Gastrocnemius medialis (tissue), 4 donors: ENCODE measurements at regions of chr1 and their contacts with region 1.

Region 1: GRCh38 chr1:164786980-164787833 is 228.2 kb downstream of the PBX1 start:
- DNase-seq: peak; percentile 75 to 89
- ATAC-seq: peak; percentile 87 to 88
- H3K4me3 ChIP-seq: peak overlapping the region; percentile 4 to 46 (median 29)
- H3K27ac ChIP-seq: peak overlapping the region; percentile 86 to 93 (median 90)
- H3K4me1 ChIP-seq: peaks cover 65 to 76% of the 10 kb centered on the region in 2 donors
- H3K27me3 ChIP-seq: no peaks in the 10 kb centered on the region
- CTCF ChIP-seq: peak; percentile 88 to 96 (median 94)
- POLR2A ChIP-seq: no peak

Region 2: GRCh38 chr1:164440232-164440631 is 347.0 kb before region 1 on chr1:
- in situ Hi-C with region 1: no loop called
- intact Hi-C with region 1: loop called (anchors 10 kb)
- DNase-seq: peak in 1 of 2 donors; percentile 20
- ATAC-seq: peak in 1 of 2 donors; percentile 76
- H3K4me3 ChIP-seq: no peak overlapping the region
- H3K27ac ChIP-seq: no peak overlapping the region
- H3K4me1 ChIP-seq: peaks cover 5 to 11% of the 10 kb centered on the region in 2 donors
- H3K27me3 ChIP-seq: no peaks in the 10 kb centered on the region
- CTCF ChIP-seq: peak in 2 of 5 experiments; percentile 9 to 43
- POLR2A ChIP-seq: no peak

Region 3: GRCh38 chr1:164518692-164519332 is 268.4 kb before region 1 on chr1:
- in situ Hi-C with region 1: no loop called
- intact Hi-C with region 1: loop called (anchors 5 kb)
- DNase-seq: no peak
- ATAC-seq: no peak
- H3K4me3 ChIP-seq: no peak overlapping the region
- H3K27ac ChIP-seq: no peak overlapping the region
- H3K4me1 ChIP-seq: peaks cover 14 to 16% of the 10 kb centered on the region in 2 donors
- H3K27me3 ChIP-seq: no peaks in the 10 kb centered on the region
- CTCF ChIP-seq: no peak
- POLR2A ChIP-seq: no peak

Region 4: GRCh38 chr1:164558461-164559341 is 228.5 kb before region 1 on chr1 and contains the start of gene PBX1:
- in situ Hi-C with region 1: loop called in 1 of 4 experiments (anchors 5 kb)
- intact Hi-C with region 1: loop called (anchors 2 kb)
- DNase-seq: peak; percentile 99
- ATAC-seq: peak; percentile 93 to 96
- H3K4me3 ChIP-seq: peak within 1 kb of the TSS; percentile 72 to 94 (median 82)
- H3K27ac ChIP-seq: peak within 1 kb of the TSS; percentile 89 to 92 (median 90)
- H3K4me1 ChIP-seq: peaks cover 16 to 18% of the 10 kb centered on the region in 2 donors
- H3K27me3 ChIP-seq: no peaks in the 10 kb centered on the region
- CTCF ChIP-seq: peak in 1 of 5 experiments; percentile 2
- POLR2A ChIP-seq: peak; percentile 66 to 92
- total RNA-seq, gene PBX1: 21.7 to 36.5 (median 29.0) TPM

Region 5: GRCh38 chr1:164637461-164638375 is 149.5 kb before region 1 on chr1:
- in situ Hi-C with region 1: loop called in 1 of 4 experiments (anchors 10 kb)
- intact Hi-C with region 1: loop called (anchors 2 kb)
- DNase-seq: peak in 1 of 2 donors; percentile 48
- ATAC-seq: peak; percentile 18 to 21
- H3K4me3 ChIP-seq: no peak overlapping the region
- H3K27ac ChIP-seq: peak overlapping the region; percentile 84 to 92 (median 90)
- H3K4me1 ChIP-seq: peaks cover 97 to 100% of the 10 kb centered on the region in 2 donors
- H3K27me3 ChIP-seq: no peaks in the 10 kb centered on the region
- CTCF ChIP-seq: no peak
- POLR2A ChIP-seq: no peak

Region 6: GRCh38 chr1:164673584-164674214 is 113.5 kb before region 1 on chr1:
- in situ Hi-C with region 1: loop called in 1 of 4 experiments (anchors 25 kb)
- intact Hi-C with region 1: loop called (anchors 2 kb)
- DNase-seq: peak; percentile 90 to 93
- ATAC-seq: peak; percentile 96 to 97
- H3K4me3 ChIP-seq: no peak overlapping the region
- H3K27ac ChIP-seq: peak overlapping the region; percentile 76 to 92 (median 80)
- H3K4me1 ChIP-seq: peaks cover 46 to 50% of the 10 kb centered on the region in 2 donors
- H3K27me3 ChIP-seq: no peaks in the 10 kb centered on the region
- CTCF ChIP-seq: peak; percentile 57 to 93 (median 87)
- POLR2A ChIP-seq: peak; percentile 24 to 49

Region 7: DNA sequence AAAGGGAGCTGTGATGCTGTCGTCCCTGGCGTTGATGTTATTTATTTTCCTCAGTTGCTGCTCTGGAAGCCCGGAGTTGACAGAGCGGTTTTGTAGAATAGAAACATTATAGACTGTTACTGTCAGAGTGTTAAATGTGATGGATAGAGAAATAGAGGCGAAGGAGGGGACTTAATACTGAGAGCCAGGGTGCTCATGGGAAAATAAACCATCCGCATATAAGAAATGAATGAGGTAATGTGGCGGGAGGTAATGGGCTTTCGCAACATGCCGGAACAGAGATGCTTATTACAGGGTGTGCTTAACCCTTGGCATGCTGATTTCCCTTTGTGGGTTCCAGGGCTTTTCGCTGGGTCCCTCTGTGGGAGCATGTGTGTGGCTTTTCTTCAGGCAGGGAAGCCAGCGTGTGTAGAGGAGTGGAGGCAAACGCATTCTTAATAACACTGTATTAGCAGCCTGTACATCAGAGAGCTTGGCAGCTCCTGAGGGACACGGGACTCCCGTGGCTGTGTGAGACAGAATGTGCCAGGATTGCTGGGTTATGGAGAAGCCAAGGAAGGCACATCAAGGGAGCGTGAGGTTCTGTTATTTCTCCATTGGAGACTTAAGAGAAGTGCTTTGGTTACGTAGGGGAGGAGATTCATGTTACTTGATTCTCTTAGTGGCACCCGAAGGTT is 87.3 kb before region 1 on chr1:
- in situ Hi-C with region 1: loop called in 2 of 4 experiments (anchors 10 to 25 kb)
- intact Hi-C with region 1: no loop called
- DNase-seq: peak; percentile 84 to 88
- ATAC-seq: peak; percentile 80 to 86
- H3K4me3 ChIP-seq: peak overlapping the region; percentile 29 to 51 (median 41)
- H3K27ac ChIP-seq: peak overlapping the region; percentile 81 to 88 (median 86)
- H3K4me1 ChIP-seq: peaks cover 19 to 64% of the 10 kb centered on the region in 2 donors
- H3K27me3 ChIP-seq: no peaks in the 10 kb centered on the region
- CTCF ChIP-seq: no peak
- POLR2A ChIP-seq: peak; percentile 56 to 64

Region 8: DNA sequence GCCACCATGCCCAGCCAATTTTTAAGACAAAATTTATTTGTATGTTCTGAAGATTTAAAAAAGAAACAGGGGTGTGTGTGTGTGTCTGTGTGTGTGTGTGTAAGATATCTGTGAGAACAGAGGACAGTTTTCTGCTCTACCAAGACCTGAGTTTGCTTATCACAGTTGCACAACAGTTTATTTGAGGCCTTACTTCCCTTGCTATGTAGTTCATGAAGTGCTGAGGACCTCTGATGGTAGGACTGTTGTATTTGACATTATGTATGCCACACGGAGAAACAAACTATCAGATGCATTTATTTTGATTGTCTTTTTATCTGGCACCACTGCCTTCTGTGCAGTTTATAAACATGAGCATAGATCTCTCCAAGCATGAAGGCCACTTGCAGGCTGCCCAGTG is 127.0 kb after region 1 on chr1:
- in situ Hi-C with region 1: no loop called
- intact Hi-C with region 1: no loop called
- DNase-seq: no peak
- ATAC-seq: peak; percentile 85 to 96
- H3K4me3 ChIP-seq: no peak overlapping the region
- H3K27ac ChIP-seq: no peak overlapping the region
- H3K4me1 ChIP-seq: peaks cover 7 to 8% of the 10 kb centered on the region in 2 donors
- H3K27me3 ChIP-seq: no peaks in the 10 kb centered on the region
- CTCF ChIP-seq: peak in 4 of 5 experiments; percentile 30 to 46 (median 36)
- POLR2A ChIP-seq: no peak